ENCODE measurements at regions of chr3 and their contacts with region 1.

Region 1: GRCh38 chr3:43296565-43296964 is 10.2 kb downstream of the SNRK start:
- DNase-seq: peak; percentile 76 to 86 (median 83)
- H3K4me3 ChIP-seq: peak overlapping the region in 1 of 2 donors; percentile 16
- H3K4me3 Mint-ChIP-seq: peak overlapping the region; percentile 67 to 86 (median 79)
- H3K27ac ChIP-seq: peak overlapping the region; percentile 59
- H3K27ac Mint-ChIP-seq: peak overlapping the region; percentile 87 to 97 (median 94)
- H3K4me1 ChIP-seq: peaks cover 97% of the 10 kb centered on the region
- H3K4me1 Mint-ChIP-seq: peaks cover 59 to 88% (median 72%) of the 10 kb centered on the region in 4 donors
- H3K27me3 ChIP-seq: no peaks in the 10 kb centered on the region
- H3K27me3 Mint-ChIP-seq: no peaks in the 10 kb centered on the region

Region 2: DNA sequence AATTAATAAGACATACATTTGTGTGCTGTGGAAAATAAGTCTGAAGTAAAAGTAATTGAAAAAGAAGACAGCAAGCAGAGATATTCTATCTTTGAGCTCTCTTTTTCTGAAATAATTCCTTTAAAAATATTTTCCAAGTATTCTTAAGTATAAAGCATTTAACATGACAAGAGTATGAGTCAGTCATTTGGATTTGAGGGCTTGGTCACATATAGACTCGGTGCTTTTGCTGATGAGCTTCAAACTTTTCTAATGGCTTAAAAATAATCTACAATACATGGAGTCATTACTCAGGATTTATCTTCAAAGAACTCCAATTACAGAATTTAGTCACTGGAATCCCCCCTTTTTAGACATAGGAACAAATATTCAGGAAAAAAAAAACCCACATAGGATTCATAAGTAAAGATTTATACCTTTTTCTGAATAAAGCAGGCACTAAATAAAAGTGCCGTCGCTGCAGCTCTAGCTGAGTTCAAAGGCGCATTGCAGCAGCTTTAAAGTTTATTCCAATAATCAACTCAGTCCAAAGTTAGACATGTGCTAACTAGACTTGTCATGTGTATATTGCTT is 1949.8 kb before region 1 on chr3:
- CTCF ChIA-PET with region 1: no interaction called
- POLR2A ChIA-PET with region 1: no interaction called
- intact Hi-C with region 1: no loop called
- DNase-seq: no peak
- H3K4me3 ChIP-seq: no peak overlapping the region
- H3K4me3 Mint-ChIP-seq: no peak overlapping the region
- H3K27ac ChIP-seq: no peak overlapping the region
- H3K27ac Mint-ChIP-seq: no peak overlapping the region
- H3K4me1 ChIP-seq: no peaks in the 10 kb centered on the region
- H3K4me1 Mint-ChIP-seq: peaks cover 0 to 3% (median 0%) of the 10 kb centered on the region in 4 donors
- H3K27me3 ChIP-seq: no peaks in the 10 kb centered on the region
- H3K27me3 Mint-ChIP-seq: no peaks in the 10 kb centered on the region

Region 3: DNA sequence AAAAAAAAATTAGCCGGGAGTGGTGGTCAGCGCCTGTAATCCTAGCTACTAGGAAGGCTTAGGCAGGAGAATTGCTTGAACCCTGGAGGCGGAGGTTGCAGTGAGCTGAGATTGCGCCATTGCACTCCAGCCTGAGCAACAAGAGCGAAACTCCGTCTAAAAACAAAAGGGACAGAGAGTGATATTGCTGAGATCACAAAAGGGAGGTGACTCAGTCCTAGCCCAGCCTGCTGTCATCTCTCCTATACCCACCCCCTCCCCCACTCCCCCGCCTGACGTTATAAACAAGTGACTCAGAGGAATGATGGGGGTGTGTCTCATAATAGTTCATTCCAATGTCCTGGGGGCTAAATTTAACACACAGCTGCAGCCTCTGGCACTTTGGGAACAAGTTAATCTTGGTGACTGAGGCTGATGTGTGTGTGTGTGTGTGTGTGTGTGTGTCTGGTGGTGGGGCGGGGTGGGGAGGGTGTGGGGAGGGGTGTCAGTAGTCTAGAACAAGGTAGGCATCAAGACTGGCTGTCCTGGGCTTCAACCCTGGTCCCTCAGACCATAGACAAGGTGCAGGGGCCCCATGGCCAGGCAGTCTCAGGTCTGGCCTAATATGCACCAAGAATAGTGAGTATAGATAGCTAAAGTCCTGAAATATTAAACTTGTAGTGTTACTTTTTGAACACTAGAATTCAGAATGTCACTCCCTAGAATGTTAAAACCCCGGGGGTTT is 612.5 kb before region 1 on chr3:
- CTCF ChIA-PET with region 1: no interaction called
- POLR2A ChIA-PET with region 1: no interaction called
- intact Hi-C with region 1: no loop called
- DNase-seq: no peak
- H3K4me3 ChIP-seq: no peak overlapping the region
- H3K4me3 Mint-ChIP-seq: no peak overlapping the region
- H3K27ac ChIP-seq: no peak overlapping the region
- H3K27ac Mint-ChIP-seq: peak overlapping the region in 1 of 7 donors; percentile 58
- H3K4me1 ChIP-seq: no peaks in the 10 kb centered on the region
- H3K4me1 Mint-ChIP-seq: peaks cover 0 to 2% (median 0%) of the 10 kb centered on the region in 4 donors
- H3K27me3 ChIP-seq: no peaks in the 10 kb centered on the region
- H3K27me3 Mint-ChIP-seq: peaks cover 15 to 26% of the 10 kb centered on the region in 2 donors

Region 4: DNA sequence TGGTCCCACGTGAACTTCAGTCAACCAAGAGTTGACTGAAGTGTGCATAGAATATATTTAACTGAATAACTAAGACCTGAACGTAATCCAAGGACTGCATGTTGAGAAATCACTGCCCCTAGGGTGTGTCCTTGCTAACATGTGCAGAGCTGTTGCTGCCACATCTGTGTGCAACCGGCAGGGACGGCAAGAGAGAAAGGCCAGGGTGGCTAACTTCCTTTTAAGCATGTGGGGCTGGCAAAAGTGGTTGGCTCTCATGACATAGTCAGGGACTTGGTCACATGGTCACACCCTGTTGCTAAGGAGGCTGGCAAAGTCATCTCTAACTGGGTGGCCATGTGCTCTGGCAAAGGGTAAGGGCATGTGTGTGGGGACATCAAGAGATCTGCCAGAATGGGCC is 265.1 kb before region 1 on chr3:
- CTCF ChIA-PET with region 1: no interaction called
- POLR2A ChIA-PET with region 1: no interaction called
- intact Hi-C with region 1: no loop called
- DNase-seq: no peak
- H3K4me3 ChIP-seq: no peak overlapping the region
- H3K4me3 Mint-ChIP-seq: no peak overlapping the region
- H3K27ac ChIP-seq: no peak overlapping the region
- H3K27ac Mint-ChIP-seq: no peak overlapping the region
- H3K4me1 ChIP-seq: no peaks in the 10 kb centered on the region
- H3K4me1 Mint-ChIP-seq: peaks cover 4 to 7% (median 5%) of the 10 kb centered on the region in 4 donors
- H3K27me3 ChIP-seq: no peaks in the 10 kb centered on the region
- H3K27me3 Mint-ChIP-seq: peaks cover 0 to 1% of the 10 kb centered on the region in 2 donors

Region 5: GRCh38 chr3:43309372-43310305 is 13.1 kb after region 1 on chr3:
- CTCF ChIA-PET with region 1: interaction called, 5 read pairs
- POLR2A ChIA-PET with region 1: interaction called, 16 read pairs
- intact Hi-C with region 1: loop called (anchors 2 kb)
- DNase-seq: no peak
- H3K4me3 ChIP-seq: no peak overlapping the region
- H3K4me3 Mint-ChIP-seq: peak overlapping the region in 4 of 8 donors; percentile 3 to 87 (median 50)
- H3K27ac ChIP-seq: no peak overlapping the region
- H3K27ac Mint-ChIP-seq: peak overlapping the region in 4 of 7 donors; percentile 3 to 76 (median 28)
- H3K4me1 ChIP-seq: peaks cover 73% of the 10 kb centered on the region
- H3K4me1 Mint-ChIP-seq: peaks cover 53 to 84% (median 66%) of the 10 kb centered on the region in 4 donors
- H3K27me3 ChIP-seq: no peaks in the 10 kb centered on the region
- H3K27me3 Mint-ChIP-seq: no peaks in the 10 kb centered on the region

Region 6: DNA sequence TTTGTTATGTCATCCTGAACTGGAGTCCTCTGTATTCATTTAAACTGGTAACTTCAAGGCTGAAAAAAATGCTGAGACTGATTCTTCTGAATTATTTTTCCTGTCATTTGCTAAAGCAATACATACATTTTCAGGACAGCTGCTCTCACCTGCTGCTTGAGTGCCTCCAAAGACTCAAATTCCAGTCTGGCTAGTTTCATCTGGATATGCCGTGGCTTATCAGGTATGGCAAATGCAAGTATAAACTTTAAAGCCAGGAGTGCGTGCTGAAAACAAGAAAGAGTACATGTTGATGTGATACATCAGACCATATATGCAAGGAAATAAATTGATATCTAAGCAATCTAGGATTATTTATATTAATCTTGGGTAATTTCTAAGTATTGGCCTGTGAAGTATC is 135.9 kb after region 1 on chr3:
- CTCF ChIA-PET with region 1: no interaction called
- POLR2A ChIA-PET with region 1: no interaction called
- intact Hi-C with region 1: no loop called
- DNase-seq: no peak
- H3K4me3 ChIP-seq: no peak overlapping the region
- H3K4me3 Mint-ChIP-seq: no peak overlapping the region
- H3K27ac ChIP-seq: no peak overlapping the region
- H3K27ac Mint-ChIP-seq: no peak overlapping the region
- H3K4me1 ChIP-seq: no peaks in the 10 kb centered on the region
- H3K4me1 Mint-ChIP-seq: peaks cover 0 to 2% (median 0%) of the 10 kb centered on the region in 4 donors
- H3K27me3 ChIP-seq: no peaks in the 10 kb centered on the region
- H3K27me3 Mint-ChIP-seq: no peaks in the 10 kb centered on the region